PC-9 (cell line): ENCODE measurements at regions of chr6 and their contacts with region 1.

Region 1: DNA sequence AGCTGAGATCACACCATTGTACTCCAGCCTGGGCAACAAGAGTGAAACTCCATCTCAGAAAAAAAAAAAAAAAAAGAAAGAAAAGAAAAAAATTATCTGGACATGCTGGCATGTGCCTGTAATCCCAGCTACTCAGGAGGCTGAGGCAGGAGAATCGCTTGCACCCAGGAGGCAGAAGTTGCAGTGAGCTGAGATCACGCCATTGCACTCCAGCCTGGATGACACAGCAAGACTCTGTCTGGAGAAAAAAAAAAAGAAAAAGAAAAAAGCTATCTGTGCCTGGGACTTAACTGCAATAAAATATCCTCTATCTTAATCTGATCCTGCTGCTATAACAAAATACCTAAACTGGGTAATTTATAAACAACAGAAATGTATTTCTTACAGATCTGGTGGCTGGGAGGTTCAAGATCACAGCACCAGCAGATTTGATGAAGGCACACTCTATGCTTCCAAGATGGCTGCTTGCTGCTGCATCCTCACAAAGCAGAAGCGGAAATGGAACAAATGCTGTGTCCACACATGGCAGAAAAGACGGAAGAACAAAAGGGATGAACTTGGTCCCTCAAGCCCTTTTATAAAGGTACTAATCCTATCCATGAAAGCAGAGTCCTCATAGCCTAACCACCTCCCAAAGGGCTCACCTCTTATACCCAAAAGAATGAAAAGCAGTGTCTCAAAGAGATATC is 273.3 kb upstream of the JARID2 start:
- DNase-seq: no peak
- H3K4me3 ChIP-seq: no peak overlapping the region
- H3K27ac ChIP-seq: no peak overlapping the region
- H3K4me1 ChIP-seq: no peaks in the 10 kb centered on the region
- H3K27me3 ChIP-seq: no peaks in the 10 kb centered on the region
- CTCF ChIP-seq: no peak

Region 2: DNA sequence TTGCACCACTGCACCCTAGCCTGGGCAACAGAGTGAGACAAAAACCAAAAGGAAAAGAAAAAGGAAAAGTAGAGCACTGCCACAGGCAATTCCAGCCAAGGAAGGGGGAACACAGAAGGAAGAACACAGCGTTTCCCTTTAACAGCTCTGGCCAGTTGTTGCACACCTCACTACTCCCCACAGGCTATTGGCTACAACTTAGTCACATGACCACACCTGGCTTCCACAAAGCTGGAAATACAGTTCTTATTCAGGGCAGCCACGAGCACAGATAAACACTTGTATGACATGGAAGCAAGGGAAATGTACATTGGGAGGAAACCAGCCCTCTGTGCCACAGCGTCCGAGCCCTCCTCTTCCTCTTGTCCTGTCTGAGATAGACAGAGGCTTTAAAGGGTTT is 24.4 kb after region 1 on chr6:
- CTCF ChIA-PET with region 1: no interaction called
- POLR2A ChIA-PET with region 1: interaction called, 12 read pairs
- intact Hi-C with region 1: no loop called
- DNase-seq: no peak
- H3K4me3 ChIP-seq: no peak overlapping the region
- H3K27ac ChIP-seq: no peak overlapping the region
- H3K4me1 ChIP-seq: no peaks in the 10 kb centered on the region
- H3K27me3 ChIP-seq: no peaks in the 10 kb centered on the region
- CTCF ChIP-seq: no peak